Sciatic nerve (tissue), 2 donors: ENCODE measurements at regions of chr21 and their contacts with region 1.

Region 1: GRCh38 chr21:37711836-37712568 is 204.3 kb downstream of the KCNJ6 start:
- DNase-seq: peak; percentile 69
- ATAC-seq: peak; percentile 79

Region 2: DNA sequence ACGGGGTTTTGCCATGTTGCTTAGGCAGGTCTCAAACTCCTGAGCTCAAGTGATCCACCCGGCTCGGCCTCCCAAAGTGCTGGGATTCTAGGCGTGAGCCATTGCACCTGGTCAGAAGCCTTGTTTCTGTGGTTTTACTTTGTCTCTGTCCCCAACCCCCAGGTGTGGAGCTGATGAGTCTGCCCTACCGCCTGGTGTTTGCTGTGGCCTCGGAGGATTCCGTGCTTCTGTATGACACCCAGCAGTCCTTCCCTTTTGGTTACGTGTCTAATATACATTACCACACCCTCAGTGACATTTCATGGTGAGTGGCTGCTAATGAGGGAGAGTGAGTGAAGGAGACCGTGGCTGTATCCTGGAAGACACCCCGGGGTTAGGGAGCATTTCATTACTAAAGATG is 1300.7 kb before region 1 on chr21:
- intact Hi-C with region 1: loop called (anchors 5 kb)
- DNase-seq: no peak
- ATAC-seq: no peak

Region 3: DNA sequence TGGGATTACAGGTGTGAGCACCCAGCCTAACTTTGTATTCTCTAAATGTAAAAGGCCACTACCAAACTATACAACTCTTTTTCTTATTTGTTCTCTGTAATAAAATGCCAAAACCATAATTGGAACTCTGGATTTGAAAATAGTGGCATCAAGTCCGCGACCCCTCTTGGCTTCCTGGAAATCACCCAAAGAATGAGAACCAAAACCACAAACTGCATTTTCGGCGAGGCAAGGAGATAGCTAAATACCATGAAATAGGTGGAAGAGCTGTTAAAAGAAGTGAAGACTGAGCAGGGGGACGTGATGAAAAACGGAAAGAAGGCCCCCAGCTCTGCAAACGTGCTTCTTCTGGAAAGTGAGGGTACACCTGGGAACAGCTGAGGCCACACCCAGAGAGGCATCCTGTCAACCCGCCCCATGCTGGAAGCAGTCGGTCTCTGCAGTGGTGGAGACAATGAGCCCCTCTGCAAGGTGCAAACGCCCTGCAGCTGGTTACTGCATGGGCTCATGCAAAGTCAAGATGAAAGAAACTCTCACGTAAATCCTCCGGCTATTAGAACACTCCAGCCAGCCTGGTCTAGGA is 467.4 kb before region 1 on chr21:
- intact Hi-C with region 1: no loop called
- DNase-seq: no peak
- ATAC-seq: no peak

Region 4: DNA sequence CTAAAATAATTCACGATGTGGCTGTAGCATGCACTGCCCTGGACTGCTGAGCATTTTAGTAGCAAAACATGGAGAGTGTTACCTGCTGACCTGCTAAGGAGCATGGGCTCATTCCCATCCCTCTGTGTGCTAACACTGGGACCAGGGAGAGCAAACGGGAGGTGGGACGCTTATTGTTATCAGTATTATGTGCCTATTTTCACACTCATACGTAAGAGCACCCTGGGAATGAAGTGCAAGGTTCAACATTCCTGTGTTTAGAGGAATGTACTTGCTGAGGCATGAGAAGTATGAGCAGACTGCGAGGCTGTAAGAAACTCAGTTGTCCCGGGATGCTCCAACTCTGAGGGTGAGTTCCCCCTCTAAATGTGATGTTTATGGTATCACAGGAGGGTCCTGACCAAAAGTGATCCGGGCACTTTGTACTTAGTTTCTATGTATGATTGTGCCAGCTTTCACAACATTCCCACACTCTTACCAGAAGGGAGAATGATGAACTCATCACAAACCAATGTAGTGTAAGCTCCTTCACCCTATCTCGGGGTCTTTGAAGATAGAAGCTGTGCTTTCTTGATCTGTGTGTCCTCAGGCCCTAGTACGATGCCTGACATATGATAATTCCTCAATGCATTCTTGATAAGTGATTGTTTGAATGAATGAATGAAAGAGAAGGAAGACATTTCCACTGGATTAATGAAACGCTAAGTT is 39.4 kb after region 1 on chr21:
- intact Hi-C with region 1: no loop called
- DNase-seq: no peak
- ATAC-seq: no peak

Region 5: GRCh38 chr21:38126669-38127303 is 414.8 kb after region 1 on chr21:
- intact Hi-C with region 1: loop called (anchors 5 kb)
- DNase-seq: no peak
- ATAC-seq: no peak